ENCODE measurements at regions of chr19 and their contacts with region 1.

Region 1: DNA sequence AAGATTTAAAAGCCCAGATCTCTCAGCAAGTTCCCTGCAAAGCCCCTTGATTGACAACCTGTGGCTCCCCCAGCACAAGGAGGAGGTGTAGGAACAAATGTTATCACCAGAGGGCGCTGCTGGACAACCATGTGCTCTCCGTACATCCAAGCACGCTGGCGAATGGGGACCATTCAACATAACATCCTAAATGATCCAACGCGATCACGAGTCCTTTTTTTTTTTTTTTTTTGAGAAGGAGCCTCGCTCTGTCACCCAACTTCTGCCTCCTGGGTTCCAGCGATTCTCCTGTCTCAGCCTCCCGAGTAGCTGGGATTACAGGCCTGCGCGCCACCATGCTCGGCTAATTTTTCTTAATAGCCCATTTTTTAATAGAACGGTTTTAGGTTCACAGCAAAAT is 52.0 kb downstream of the NWD1 start:
- DNase-seq: peak; percentile 93
- ATAC-seq: peak; percentile 90
- H3K4me3 ChIP-seq: no peak overlapping the region
- H3K27ac ChIP-seq: no peak overlapping the region
- H3K4me1 ChIP-seq: no peaks in the 10 kb centered on the region
- H3K27me3 ChIP-seq: no peaks in the 10 kb centered on the region
- CTCF ChIP-seq: peak; percentile 87

Region 2: GRCh38 chr19:16698914-16699313 is 72.7 kb before region 1 on chr19:
- CTCF ChIA-PET with region 1: no interaction called
- POLR2A ChIA-PET with region 1: no interaction called
- intact Hi-C with region 1: no loop called
- DNase-seq: no peak
- ATAC-seq: no peak
- H3K4me3 ChIP-seq: no peak overlapping the region
- H3K27ac ChIP-seq: no peak overlapping the region
- H3K4me1 ChIP-seq: no peaks in the 10 kb centered on the region
- H3K27me3 ChIP-seq: no peaks in the 10 kb centered on the region
- CTCF ChIP-seq: no peak

Region 3: DNA sequence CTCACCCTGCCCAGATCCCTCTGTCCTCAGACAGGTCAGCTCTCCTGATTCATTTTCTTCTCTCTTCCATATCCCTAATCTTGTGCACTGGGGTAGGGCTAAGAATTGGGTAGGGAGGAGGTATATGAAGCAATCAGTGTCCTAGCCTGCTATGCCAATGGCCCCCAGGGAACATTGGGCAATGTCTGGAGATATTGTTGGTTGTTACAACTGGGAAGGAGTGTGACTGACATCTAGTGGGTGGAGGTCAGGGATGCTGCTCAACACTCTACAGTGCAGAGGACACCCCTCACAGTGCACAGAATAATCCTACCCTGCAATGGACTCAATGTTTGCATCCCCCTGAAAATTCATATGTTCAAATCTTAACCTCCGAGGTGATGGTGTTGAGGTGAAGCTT is 197.5 kb after region 1 on chr19:
- CTCF ChIA-PET with region 1: no interaction called
- POLR2A ChIA-PET with region 1: no interaction called
- intact Hi-C with region 1: loop called (anchors 5 kb)
- DNase-seq: peak; percentile 63
- ATAC-seq: peak; percentile 78
- H3K4me3 ChIP-seq: no peak overlapping the region
- H3K27ac ChIP-seq: no peak overlapping the region
- H3K4me1 ChIP-seq: no peaks in the 10 kb centered on the region
- H3K27me3 ChIP-seq: no peaks in the 10 kb centered on the region
- CTCF ChIP-seq: peak; percentile 70

Region 4: GRCh38 chr19:17052439-17053210 is 281.0 kb after region 1 on chr19:
- CTCF ChIA-PET with region 1: no interaction called
- POLR2A ChIA-PET with region 1: no interaction called
- intact Hi-C with region 1: loop called (anchors 1 kb)
- DNase-seq: peak; percentile 71
- ATAC-seq: no peak
- H3K4me3 ChIP-seq: no peak overlapping the region
- H3K27ac ChIP-seq: no peak overlapping the region
- H3K4me1 ChIP-seq: peaks cover 10% of the 10 kb centered on the region
- H3K27me3 ChIP-seq: no peaks in the 10 kb centered on the region
- CTCF ChIP-seq: peak; percentile 75

Measured in PC-3 (cell line).